ENCODE measurements at regions of chr12 and their contacts with region 1.

Region 1: GRCh38 chr12:2682296-2683251 is 112.2 kb upstream of the FKBP4 start:
- DNase-seq: peak in 30 of 35 experiments; percentile 23 to 66 (median 45)
- ATAC-seq: peak in 3 of 4 experiments; percentile 59 to 75 (median 64)
- H3K4me3 ChIP-seq: no peak overlapping the region
- H3K4me3 Mint-ChIP-seq: no peak overlapping the region
- H3K27ac ChIP-seq: no peak overlapping the region
- H3K27ac Mint-ChIP-seq: peak overlapping the region; percentile 74 to 78
- H3K4me1 ChIP-seq: no peaks in the 10 kb centered on the region
- H3K4me1 Mint-ChIP-seq: peaks cover 5 to 15% (median 6%) of the 10 kb centered on the region in 3 donors
- H3K27me3 ChIP-seq: no peaks in the 10 kb centered on the region
- H3K27me3 Mint-ChIP-seq: peaks cover 0 to 1% of the 10 kb centered on the region in 2 donors

Region 2: GRCh38 chr12:2783936-2784600 is 101.5 kb after region 1 on chr12:
- CTCF ChIA-PET with region 1: interaction called, 9 to 12 read pairs
- POLR2A ChIA-PET with region 1: no interaction called
- DNase-seq: peak in 25 of 35 experiments; percentile 6 to 71 (median 30)
- ATAC-seq: peak; percentile 82 to 93 (median 88)
- H3K4me3 ChIP-seq: peak overlapping the region; percentile 22 to 44
- H3K4me3 Mint-ChIP-seq: peak overlapping the region; percentile 72 to 77 (median 75)
- H3K27ac ChIP-seq: no peak overlapping the region
- H3K27ac Mint-ChIP-seq: no peak overlapping the region
- H3K4me1 ChIP-seq: peaks cover 0 to 10% of the 10 kb centered on the region in 2 experiments
- H3K4me1 Mint-ChIP-seq: peaks cover 12 to 13% (median 12%) of the 10 kb centered on the region in 3 donors
- H3K27me3 ChIP-seq: peaks cover 2 to 23% of the 10 kb centered on the region in 2 experiments
- H3K27me3 Mint-ChIP-seq: peaks cover 10 to 15% of the 10 kb centered on the region in 2 donors